AG04450 (cell line): ENCODE measurements at regions of chr16 and their contacts with region 1.

Region 1: GRCh38 chr16:50806099-50807062 is 64.5 kb downstream of the CYLD start:
- DNase-seq: peak; percentile 77
- H3K4me3 ChIP-seq: peak overlapping the region; percentile 60
- H3K27ac ChIP-seq: peak overlapping the region; percentile 48
- H3K27me3 ChIP-seq: no peaks in the 10 kb centered on the region
- CTCF ChIP-seq: peak; percentile 75

Region 2: GRCh38 chr16:50210266-50211038 is 595.9 kb before region 1 on chr16:
- CTCF ChIA-PET with region 1: interaction called, 16 read pairs
- POLR2A ChIA-PET with region 1: no interaction called
- DNase-seq: peak; percentile 59
- H3K4me3 ChIP-seq: no peak overlapping the region
- H3K27ac ChIP-seq: no peak overlapping the region
- H3K27me3 ChIP-seq: no peaks in the 10 kb centered on the region
- CTCF ChIP-seq: peak; percentile 86

Region 3: DNA sequence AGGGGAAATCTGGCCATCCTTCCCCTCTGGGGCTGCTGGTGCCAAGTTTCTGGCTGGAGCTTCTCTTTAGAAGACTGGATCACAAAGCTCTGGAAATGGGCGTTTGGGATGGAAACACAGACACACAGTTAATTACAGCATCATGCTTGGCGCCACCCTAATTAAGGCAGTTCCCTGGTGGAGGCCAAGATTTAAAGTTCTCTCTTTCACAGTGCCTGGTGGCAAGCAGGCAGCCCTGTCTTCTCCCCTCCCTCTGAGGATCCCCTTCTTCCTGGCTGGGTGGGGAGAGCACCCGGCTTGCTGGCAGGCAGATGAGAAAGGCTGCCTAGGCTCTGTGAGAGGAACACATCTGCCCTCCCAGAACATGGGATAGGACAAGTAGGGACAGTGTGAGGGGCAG is 317.2 kb before region 1 on chr16:
- CTCF ChIA-PET with region 1: no interaction called
- POLR2A ChIA-PET with region 1: no interaction called
- DNase-seq: no peak
- H3K4me3 ChIP-seq: no peak overlapping the region
- H3K27ac ChIP-seq: no peak overlapping the region
- H3K27me3 ChIP-seq: no peaks in the 10 kb centered on the region
- CTCF ChIP-seq: no peak

Region 4: DNA sequence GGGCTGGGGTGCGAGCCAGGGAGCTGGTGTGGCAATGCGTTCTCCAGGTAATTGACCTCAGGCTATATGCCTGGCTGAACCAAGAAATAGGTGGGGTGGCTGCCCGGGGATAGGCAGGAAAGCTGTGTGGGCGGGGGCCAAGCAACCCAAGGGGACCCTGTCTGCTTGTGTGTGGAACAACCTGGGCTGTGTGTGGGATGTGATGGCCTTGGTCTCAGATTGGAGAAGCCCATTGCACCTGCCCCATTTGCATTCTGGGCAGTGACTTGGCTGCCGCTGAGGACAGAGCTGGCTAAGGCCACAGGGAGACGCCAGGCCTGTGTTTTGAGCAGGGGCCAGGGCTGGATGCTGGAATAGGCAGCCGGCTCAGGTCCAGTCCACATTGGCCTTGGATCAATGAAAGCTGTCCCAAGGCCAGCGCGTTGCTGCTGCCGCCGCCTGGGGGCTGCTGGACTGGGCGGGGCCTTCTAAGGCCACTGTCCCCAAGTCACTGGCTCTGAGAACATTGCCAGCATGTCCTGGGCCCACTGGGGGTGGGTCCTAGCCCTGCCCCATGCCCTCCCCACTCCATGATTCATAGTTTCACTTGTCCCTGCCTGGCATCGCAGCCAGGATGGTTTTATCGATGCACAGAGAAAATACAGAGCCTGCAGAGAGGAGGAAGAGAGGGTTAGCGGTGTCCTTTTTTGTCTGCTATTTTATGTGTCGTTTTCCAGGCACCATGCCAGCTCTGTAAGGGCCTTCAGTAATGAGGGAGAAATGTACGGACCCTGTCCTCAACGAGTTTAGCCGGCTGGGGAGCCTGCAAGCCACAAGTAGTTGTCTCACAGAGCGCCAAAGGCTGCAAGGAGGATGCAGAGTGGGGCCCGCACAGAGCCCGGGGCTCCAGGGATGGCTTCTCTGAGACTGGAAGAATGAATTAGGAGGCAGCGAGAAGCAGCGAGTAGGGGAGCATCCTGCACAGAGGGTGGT is 214.3 kb before region 1 on chr16:
- CTCF ChIA-PET with region 1: interaction called, 45 read pairs
- POLR2A ChIA-PET with region 1: no interaction called
- DNase-seq: no peak
- H3K4me3 ChIP-seq: no peak overlapping the region
- H3K27ac ChIP-seq: no peak overlapping the region
- H3K27me3 ChIP-seq: peaks cover 11% of the 10 kb centered on the region
- CTCF ChIP-seq: no peak

Region 5: DNA sequence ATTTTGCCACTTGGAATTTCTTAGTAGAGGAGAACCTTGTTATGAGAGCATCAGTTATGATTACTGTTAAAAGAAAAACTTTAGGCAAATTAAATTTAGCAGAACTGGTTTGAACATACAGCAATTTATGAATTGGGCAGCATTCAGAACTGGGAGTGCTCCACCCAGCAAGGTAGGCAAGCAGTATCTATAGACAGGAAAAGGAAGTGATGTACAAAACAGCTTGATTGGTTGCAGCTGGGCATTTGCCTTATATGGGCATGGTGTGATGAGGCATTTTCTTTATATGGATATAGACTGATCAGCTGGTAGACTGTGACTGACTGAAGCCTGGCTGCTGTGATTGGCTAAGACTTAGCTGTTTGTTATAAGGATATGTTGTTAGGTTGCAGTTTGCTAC is 82.1 kb before region 1 on chr16:
- CTCF ChIA-PET with region 1: interaction called, 12 read pairs
- POLR2A ChIA-PET with region 1: no interaction called
- DNase-seq: no peak
- H3K4me3 ChIP-seq: no peak overlapping the region
- H3K27ac ChIP-seq: no peak overlapping the region
- H3K27me3 ChIP-seq: no peaks in the 10 kb centered on the region
- CTCF ChIP-seq: no peak

Region 6: DNA sequence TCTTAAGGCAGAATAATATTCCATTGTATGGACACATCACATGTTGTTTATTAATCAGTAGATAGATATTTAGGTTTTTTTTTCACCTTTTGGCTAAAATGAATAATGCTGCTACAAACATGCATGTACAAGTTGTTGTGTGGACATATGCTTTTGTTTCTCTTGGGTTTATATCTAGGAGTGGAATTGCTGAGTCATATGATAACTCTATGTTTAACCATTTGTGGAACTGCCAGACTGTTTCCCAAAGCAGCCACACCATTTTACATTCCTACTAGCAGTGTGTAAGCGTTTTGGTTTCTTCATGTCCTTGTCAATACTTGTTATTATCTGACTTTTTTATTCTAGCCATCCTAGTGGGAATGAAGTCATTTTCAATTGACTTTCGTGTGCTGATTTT is 43.2 kb before region 1 on chr16:
- CTCF ChIA-PET with region 1: interaction called, 69 read pairs
- POLR2A ChIA-PET with region 1: no interaction called
- DNase-seq: no peak
- H3K4me3 ChIP-seq: no peak overlapping the region
- H3K27ac ChIP-seq: no peak overlapping the region
- H3K27me3 ChIP-seq: no peaks in the 10 kb centered on the region
- CTCF ChIP-seq: no peak

Region 7: DNA sequence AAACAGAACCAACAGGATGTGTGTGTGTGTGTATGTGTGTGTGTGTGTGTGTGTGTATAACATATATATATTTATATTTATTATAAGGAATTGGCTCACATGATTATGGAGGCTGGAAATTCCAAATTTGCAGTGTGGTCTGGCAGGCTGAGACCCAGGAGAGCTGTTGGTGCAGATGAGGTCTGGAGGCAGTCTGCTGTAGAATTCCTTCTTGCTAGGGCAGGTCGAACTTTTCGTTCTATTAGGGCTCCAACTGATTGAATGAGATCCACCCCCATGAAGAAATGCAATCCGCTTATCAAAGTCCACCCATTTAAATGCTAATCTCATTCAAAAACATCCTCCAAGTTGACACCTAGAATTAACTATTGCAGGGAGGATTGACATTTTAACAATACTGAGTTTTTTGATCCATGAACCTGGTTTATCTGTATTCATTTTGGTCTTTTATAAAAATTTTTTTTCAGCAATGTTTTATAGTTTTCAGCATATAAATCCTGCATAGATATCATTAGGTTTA is 20.5 kb after region 1 on chr16:
- CTCF ChIA-PET with region 1: interaction called, 17 read pairs
- POLR2A ChIA-PET with region 1: no interaction called
- DNase-seq: no peak
- H3K4me3 ChIP-seq: no peak overlapping the region
- H3K27ac ChIP-seq: no peak overlapping the region
- H3K27me3 ChIP-seq: peaks cover 2% of the 10 kb centered on the region
- CTCF ChIP-seq: no peak

Region 8: DNA sequence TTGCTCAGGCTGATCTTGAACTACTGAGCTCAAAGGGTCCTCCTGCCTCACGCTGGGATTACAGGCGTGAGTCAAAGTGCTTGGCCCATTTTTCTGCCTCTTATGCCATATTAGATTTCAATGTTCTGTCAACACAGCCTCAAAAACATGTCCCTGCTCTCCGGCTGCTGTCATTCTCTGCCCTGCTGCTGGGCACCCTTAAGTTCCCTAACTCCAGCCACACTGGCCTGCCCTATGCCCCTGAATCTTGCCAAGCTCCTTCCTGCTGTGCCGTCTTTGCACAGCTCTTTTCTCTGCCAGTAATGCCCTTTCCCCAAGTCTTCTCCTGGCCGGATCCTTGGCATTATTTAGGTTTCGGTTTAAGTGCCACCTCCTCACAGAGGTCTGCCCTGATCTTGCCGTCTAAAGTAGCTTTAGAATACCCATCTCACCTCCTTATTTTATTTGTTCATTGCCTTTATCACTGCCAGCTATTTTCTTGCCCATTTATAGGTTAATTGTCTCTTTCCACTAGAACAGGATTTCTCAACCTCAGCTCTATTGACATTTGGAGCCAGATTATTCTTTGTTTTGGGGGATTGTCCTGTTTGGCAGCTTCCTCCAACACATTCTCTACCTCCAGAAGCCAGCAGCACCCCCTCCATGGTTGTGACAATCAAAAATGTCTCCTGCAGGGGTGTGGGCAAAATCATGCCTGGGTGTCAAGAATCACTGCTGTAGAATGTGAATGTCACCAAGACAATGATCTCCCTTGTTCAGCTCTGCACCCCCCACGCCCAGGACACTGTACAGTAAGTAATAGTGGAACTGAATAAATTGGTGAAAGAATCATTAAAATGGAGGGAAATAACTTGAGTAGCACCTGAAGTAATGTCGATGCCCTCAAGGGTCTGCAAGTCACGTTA is 103.7 kb after region 1 on chr16:
- CTCF ChIA-PET with region 1: no interaction called
- POLR2A ChIA-PET with region 1: no interaction called
- DNase-seq: no peak
- H3K4me3 ChIP-seq: no peak overlapping the region
- H3K27ac ChIP-seq: no peak overlapping the region
- H3K27me3 ChIP-seq: peaks cover 6% of the 10 kb centered on the region
- CTCF ChIP-seq: no peak

Region 9: DNA sequence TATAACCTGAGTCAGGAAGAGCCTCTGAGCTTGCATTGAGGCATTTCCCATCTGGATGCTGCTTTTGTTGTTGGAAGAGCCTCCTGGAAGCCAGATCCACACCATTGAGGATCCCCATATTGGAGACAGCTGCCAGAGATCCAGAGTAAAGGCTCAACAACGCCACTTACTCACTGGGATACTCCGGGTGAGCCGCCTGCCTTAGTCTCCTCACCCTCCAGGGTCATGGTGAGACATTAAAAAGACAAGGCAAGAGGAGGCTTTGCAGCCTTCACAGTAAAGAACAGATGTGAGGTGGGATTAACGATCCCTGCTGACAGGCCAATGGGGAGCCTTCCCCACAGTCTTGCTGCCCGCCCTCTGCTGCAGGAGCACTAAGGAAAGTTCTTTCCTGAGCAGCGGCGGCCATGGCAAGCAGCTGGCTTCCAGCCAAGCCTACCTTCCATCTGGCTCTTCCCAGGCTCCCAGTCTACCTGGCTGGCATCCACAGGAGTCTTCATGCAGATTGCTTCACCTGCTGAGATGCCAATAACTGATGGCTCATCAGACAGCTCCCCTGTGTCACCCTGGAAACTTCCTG is 134.0 kb after region 1 on chr16:
- CTCF ChIA-PET with region 1: no interaction called
- POLR2A ChIA-PET with region 1: no interaction called
- DNase-seq: no peak
- H3K4me3 ChIP-seq: no peak overlapping the region
- H3K27ac ChIP-seq: no peak overlapping the region
- H3K27me3 ChIP-seq: no peaks in the 10 kb centered on the region
- CTCF ChIP-seq: no peak

Region 10: DNA sequence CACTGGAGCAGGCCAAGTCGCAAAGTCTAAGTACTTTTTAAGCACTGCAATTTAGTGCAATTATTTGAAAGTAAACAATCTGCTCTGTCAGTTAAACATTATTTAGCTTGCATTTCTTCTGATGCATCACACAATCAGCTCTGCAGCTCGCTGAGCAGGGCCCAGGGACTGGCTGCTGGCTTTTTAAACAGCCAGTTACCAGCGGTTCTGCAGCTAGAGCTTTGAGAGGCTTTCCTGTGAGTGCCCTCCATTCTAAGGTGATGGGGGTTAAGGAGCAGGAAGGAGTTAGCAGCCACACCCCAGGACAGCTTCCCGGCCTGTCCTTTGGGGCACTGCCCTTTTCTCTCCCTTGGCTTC is 190.4 kb after region 1 on chr16:
- CTCF ChIA-PET with region 1: no interaction called
- POLR2A ChIA-PET with region 1: no interaction called
- DNase-seq: no peak
- H3K4me3 ChIP-seq: no peak overlapping the region
- H3K27ac ChIP-seq: no peak overlapping the region
- H3K27me3 ChIP-seq: no peaks in the 10 kb centered on the region
- CTCF ChIP-seq: no peak